HEK293 (cell line): ENCODE measurements at regions of chr14 and their contacts with region 1.

Region 1: DNA sequence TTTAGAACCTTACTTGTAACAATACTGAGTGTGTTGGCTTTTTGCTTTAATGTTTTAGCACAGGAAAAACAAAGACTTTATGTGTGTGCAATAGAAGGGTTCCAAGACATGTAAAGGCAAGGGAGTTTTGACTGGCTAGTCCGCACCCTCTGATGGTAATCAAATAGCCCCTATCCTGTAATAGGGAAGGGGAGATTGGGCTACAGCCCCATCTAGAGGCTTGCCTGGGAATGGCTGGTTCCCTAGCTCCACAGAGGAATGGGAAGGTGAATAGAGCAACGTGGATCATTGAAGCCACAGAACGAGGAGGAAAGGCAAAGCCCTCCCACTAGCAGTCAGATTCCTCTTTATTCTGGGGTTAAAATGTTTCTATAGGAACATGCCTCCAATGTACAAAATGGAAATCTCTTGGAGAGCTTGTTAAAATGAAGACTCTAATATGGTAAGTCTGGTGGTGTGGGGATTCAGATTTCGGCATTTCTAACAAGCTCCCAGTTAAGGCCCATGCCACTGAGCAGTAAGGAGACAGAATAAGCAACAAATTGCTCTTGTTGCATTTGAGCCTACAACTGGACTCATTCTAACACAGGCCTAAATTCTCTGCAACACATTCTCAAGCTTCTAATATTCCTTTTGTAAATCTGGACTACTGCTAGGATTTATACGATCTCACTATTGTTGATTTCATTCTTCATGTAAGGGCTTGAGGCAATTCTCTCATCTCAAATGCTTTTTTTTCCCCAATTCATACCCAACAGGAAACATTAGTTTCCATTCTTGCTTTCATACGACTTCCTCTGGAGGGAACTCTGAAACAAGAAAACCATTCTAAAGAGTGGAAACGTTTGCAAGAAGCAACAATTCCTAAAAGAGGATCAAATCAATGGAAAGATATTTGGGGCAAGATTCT is 57.1 kb downstream of the NIN start:
- H3K4me3 ChIP-seq: no peak overlapping the region
- H3K27ac ChIP-seq: no peak overlapping the region
- H3K4me1 ChIP-seq: peaks cover 16% of the 10 kb centered on the region; the same call in 1 of the 2 replicates
- CTCF ChIP-seq: peak; percentile 60; the same call in 1 of the 2 replicates

Region 2: DNA sequence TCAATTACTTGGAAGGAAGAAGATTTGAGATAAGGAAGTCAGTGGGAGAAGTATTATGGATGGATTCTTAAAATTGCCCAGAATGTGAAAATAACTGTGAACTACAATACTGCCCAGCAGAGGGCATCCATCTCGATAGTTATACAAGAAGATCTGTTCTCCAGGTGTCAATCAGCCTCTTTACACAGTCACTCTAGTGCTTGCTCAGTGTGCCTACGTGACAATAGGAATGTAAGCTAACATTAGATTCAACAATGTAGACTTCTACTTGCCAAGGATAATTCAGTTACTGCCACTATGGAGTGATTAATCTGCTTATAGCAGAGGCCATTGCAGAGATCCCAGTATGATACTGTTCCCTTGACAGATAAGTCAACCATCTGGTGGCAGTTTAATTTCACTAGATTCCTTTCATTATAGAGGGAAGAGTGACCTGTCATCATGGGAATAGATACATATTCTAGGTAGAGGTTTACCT is 230.9 kb before region 1 on chr14:
- CTCF ChIA-PET with region 1: interaction called, 37 read pairs
- POLR2A ChIA-PET with region 1: no interaction called
- H3K4me3 ChIP-seq: no peak overlapping the region
- H3K27ac ChIP-seq: no peak overlapping the region
- H3K4me1 ChIP-seq: no peaks in the 10 kb centered on the region
- CTCF ChIP-seq: peak; percentile 36; the same call in 1 of the 2 replicates

Region 3: GRCh38 chr14:50599700-50600444 is 174.0 kb before region 1 on chr14:
- CTCF ChIA-PET with region 1: interaction called, 21 read pairs
- POLR2A ChIA-PET with region 1: no interaction called
- H3K4me3 ChIP-seq: no peak overlapping the region
- H3K27ac ChIP-seq: peak overlapping the region; percentile 50; the same call in 1 of the 2 replicates
- H3K4me1 ChIP-seq: peaks cover 6% of the 10 kb centered on the region
- CTCF ChIP-seq: no peak

Region 4: GRCh38 chr14:50619556-50620141 is 154.2 kb before region 1 on chr14:
- CTCF ChIA-PET with region 1: interaction called, 33 read pairs
- POLR2A ChIA-PET with region 1: no interaction called
- H3K4me3 ChIP-seq: no peak overlapping the region
- H3K27ac ChIP-seq: no peak overlapping the region
- H3K4me1 ChIP-seq: peaks cover 11% of the 10 kb centered on the region
- CTCF ChIP-seq: peak; percentile 29; the same call in 1 of the 2 replicates

Region 5: DNA sequence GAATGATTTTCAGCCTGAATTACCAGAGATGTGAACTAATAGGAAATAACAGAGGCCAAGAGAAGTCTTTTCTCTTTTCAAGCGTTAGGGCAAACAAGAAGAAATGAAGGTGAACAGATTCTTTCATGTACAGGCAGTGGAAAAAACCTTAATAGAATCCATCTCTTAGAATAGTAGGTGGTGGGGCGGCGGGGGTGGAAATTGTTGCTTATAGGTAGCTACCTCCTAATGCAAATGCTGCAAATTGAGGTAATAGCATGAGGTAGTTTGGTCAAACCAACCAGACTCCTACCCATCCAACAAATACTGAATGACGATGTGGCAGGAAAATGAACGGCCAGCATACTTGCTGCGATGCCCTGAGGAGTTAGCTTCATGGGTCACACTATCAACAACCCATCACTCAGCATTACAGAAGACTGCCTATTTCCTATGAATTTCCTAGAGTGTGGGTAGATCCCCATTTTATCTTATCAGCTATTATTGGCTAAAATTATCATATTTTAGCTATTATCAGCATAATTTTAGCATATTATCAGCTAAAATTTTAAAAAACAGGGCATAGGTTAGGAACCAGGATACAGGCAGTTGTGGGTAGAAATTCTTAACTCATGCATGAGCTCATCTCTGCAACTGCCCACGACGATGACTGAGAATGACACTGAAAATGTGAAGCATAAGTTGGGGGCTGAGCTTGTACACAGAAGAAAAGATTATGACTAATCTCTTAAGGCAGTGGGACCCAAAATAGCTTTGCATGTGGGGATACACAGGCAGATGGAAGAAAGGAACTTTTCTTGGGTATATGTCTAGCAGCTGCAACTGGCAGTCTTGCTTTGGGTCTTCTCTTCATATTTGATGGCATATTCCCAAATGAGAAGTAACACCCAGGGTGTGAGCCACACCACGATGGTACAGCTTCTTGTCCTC is 11.6 kb before region 1 on chr14:
- CTCF ChIA-PET with region 1: interaction called, 107 read pairs
- POLR2A ChIA-PET with region 1: no interaction called
- H3K4me3 ChIP-seq: no peak overlapping the region
- H3K27ac ChIP-seq: peak overlapping the region; percentile 87
- H3K4me1 ChIP-seq: peaks cover 17% of the 10 kb centered on the region
- CTCF ChIP-seq: no peak

Region 6: GRCh38 chr14:50804181-50804721 is 30.4 kb after region 1 on chr14:
- CTCF ChIA-PET with region 1: interaction called, 10 read pairs
- POLR2A ChIA-PET with region 1: no interaction called
- H3K4me3 ChIP-seq: no peak overlapping the region
- H3K27ac ChIP-seq: no peak overlapping the region
- H3K4me1 ChIP-seq: peaks cover 10% of the 10 kb centered on the region
- CTCF ChIP-seq: no peak

Region 7: DNA sequence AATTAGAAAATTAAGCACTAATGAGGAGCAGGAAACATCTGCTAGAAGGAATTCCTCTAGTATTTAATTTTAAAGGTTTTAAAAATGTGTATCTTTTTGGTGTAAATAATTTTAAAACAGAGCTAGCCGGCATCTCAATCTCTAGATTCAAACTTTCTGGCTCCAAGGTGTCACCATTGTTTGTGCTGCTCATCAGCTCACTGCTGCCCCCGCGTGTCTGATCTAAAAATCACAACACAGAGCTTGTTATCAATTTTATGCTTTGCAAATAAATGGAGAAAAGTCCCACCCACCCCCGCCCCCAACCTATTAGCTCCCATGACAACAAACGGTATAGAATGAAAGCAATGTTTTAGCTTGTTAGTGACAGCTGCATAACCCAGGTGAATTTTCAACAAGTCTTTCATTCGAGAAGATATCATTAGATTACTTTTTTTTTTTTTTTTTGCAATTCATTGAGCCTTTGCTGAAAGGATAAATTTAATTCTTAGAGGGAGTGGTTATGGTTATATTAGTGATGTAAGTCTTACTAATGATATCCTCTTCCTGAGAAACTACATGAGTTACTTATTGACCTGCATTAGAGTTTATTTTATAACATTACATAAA is 86.7 kb after region 1 on chr14:
- CTCF ChIA-PET with region 1: interaction called, 62 read pairs
- POLR2A ChIA-PET with region 1: interaction called, 3 read pairs
- H3K4me3 ChIP-seq: peak overlapping the region; percentile 38
- H3K27ac ChIP-seq: peak overlapping the region; percentile 69; the same call in 1 of the 2 replicates
- H3K4me1 ChIP-seq: peaks cover 7% of the 10 kb centered on the region; the same call in 1 of the 2 replicates
- CTCF ChIP-seq: no peak